ENCODE measurements at regions of chr12 and their contacts with region 1.

Region 1: DNA sequence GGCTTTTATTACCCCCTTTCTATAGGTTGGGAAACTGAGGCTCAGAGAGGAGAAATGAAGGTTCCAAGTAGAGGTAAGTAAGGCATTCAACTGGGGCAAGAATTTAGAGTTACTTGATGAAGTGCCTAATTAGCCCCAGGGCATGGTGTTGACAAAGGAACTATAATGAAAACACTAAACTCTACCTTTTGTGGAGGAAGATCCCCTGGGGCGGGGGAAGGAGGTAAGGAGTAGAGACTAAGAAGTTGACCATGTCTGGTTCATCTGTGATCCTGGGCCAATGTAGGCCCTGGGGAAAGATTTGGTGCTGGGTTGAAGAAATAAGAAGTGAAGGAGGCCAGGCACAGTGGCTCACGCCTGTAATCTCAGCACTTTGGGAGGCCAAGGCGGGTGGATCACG is 16.2 kb upstream of the COX6A1 start:
- DNase-seq: no peak
- ATAC-seq: no peak
- H3K4me3 ChIP-seq: no peak overlapping the region
- H3K27ac ChIP-seq: no peak overlapping the region
- H3K4me1 ChIP-seq: no peaks in the 10 kb centered on the region
- H3K27me3 ChIP-seq: no peaks in the 10 kb centered on the region
- CTCF ChIP-seq: no peak

Region 2: GRCh38 chr12:120067084-120067869 is 354.4 kb before region 1 on chr12:
- intact Hi-C with region 1: no loop called
- DNase-seq: no peak
- ATAC-seq: no peak
- H3K4me3 ChIP-seq: no peak overlapping the region
- H3K27ac ChIP-seq: no peak overlapping the region
- H3K4me1 ChIP-seq: no peaks in the 10 kb centered on the region
- H3K27me3 ChIP-seq: no peaks in the 10 kb centered on the region
- CTCF ChIP-seq: no peak

Region 3: GRCh38 chr12:120361506-120362208 is 60.0 kb before region 1 on chr12:
- intact Hi-C with region 1: loop called in 1 of 3 experiments (anchors 10 kb)
- DNase-seq: peak in 5 of 6 donors; percentile 40 to 81 (median 65)
- ATAC-seq: peak; percentile 8 to 55 (median 32)
- H3K4me3 ChIP-seq: peak overlapping the region in 2 of 4 donors; percentile 21 to 32
- H3K27ac ChIP-seq: peak overlapping the region in 1 of 4 donors; percentile 23
- H3K4me1 ChIP-seq: peaks cover 7 to 12% (median 11%) of the 10 kb centered on the region in 3 donors
- H3K27me3 ChIP-seq: no peaks in the 10 kb centered on the region
- CTCF ChIP-seq: no peak

Region 4: DNA sequence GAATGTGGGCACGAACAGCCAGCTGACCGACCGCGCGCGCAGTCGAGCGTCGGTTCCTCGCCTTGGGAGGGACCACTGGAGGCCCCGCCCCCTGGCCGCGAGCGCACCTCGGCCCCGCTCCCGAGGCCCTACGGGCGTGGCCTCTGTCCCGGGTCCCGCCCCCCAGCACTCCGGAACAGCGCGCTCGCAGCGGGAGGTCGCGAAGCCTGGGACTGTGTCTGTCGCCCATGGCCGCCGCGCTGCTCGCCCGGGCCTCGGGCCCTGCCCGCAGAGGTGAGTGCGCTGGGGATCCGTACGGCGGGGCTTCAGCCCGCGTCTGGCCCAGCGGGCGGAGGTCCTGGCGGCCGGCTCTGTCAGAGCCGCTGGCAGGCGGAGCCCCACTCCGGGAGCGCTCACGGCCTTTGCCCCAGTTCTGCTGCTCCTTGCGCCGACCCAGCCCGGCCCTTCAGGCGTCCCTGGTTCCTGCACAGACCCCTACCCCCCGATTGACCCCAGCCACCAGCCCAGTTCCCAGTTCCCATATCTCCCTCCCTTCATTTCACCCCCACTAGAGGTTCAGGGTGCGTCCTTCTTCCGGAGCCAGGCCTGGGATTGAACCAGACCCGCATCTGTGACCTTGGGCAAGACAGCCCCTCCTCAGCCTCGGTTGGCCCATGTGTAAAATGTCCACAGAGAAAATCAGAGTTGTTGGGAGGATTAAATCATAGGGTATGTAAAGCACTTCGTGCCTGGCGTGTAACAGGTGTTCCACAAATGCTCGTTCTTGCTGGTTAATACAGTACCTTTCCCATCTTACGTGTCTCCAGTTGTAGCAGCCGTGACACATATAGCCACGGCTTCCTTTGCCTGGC is 304.2 kb after region 1 on chr12 and contains the start of gene ACADS:
- intact Hi-C with region 1: no loop called
- DNase-seq: peak; percentile 89 to 97 (median 94)
- ATAC-seq: peak; percentile 98 to 99 (median 98)
- H3K4me3 ChIP-seq: peak within 1 kb of the TSS; percentile 75 to 82 (median 82)
- H3K27ac ChIP-seq: peak within 1 kb of the TSS; percentile 75 to 87 (median 76)
- H3K4me1 ChIP-seq: no peaks in the 10 kb centered on the region
- H3K27me3 ChIP-seq: no peaks in the 10 kb centered on the region
- CTCF ChIP-seq: no peak
- total RNA-seq, gene ACADS: 15.2 to 22.8 (median 18.6) TPM

Measured in pancreas (tissue), 10 donors.